ENCODE measurements at regions of chr16 and their contacts with region 1.

Region 1: DNA sequence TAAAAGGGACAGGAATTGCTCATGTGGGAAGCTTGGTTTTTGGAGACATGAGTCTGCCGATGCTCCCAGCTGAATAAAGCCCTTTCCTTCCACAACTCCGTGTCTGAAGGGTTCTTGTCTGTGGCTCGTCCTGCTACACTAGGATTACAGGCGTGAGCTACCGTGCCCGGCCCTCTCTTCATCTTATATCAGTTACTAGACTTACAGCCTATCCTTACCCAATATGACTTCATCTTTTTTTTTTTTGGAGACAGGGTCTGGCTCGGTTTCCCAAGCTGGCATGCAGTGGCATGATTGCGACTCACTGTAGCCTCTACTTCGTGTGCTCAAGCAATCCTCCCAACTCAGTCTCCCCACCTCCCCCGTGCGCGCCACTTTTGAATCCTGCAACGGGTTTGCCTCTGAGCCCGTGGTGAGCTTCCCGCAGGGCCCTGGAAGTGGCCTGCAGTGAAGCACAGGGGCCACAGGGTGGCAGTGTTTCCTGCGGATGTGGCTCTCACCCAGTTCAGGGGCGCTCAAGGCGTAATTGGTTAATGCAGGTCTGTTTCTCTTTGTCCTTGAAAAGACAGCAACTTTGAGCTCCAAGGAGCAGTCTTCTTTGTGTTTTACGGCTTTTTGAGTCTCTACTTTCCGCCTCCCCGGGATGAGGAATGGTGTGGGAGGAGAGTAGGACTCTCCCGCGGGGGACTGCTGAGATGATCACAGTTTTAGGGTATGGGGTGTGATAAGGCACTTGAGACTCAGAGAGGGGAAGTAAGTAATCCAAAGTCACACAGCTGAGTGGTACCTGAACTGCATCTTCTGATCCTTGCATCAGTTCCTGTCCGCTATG is 22.7 kb upstream of the GPRC5B start:
- DNase-seq: peak; percentile 62
- ATAC-seq: peak; percentile 99
- H3K4me3 ChIP-seq: no peak overlapping the region
- H3K27ac ChIP-seq: no peak overlapping the region
- H3K4me1 ChIP-seq: peaks cover 0 to 8% of the 10 kb centered on the region in 2 experiments; a peak in 2 of 4 replicates
- H3K27me3 ChIP-seq: no peaks in the 10 kb centered on the region
- CTCF ChIP-seq: peak; percentile 95 to 99 (median 98)
- POLR2A ChIP-seq: no peak
- RAD21 ChIP-seq: peak; percentile 94

Region 2: DNA sequence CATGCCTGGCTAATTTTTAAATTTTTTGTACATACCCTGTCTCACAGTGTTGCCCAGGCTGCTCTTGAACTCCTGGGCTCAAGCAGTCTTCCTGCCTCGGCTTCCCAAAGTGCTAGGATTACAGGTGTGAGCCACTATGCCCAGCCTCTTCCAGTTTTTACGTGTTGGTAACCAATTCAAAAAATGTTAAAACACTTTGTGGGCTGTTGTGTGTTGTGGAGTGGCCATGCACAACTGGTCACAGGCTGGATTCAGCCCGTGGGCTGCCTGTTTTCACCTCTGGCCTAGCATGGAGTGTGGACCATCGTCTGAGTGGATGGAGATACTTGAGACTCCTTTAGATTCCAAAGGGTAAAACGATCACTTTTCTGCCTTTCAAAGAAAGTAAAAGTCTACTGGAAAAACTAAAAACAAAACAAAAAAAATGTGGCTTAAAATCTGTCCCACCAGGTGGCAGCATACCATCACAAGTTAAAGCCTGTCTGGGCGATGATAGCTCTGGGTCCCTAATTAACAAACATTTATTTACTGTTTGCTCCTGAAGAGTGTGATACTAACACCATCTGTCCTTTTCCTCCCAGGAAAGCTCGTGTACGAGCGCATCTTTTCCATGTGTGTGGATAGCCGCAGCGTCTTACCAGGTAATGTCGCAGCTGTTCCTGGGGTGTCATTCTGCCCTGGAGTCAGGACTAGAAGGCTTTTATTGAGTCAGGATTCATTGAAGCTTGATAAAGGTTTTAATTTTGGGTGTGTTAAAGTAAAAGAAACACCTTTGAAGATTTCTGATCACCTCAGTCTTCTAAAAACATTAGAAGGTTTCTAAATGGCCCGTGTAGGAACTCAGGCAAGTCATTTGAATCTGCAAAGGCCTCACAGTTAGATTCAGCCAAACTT is 306.0 kb before region 1 on chr16:
- CTCF ChIA-PET with region 1: interaction called, 12 read pairs
- POLR2A ChIA-PET with region 1: no interaction called
- RAD21 ChIA-PET with region 1: no interaction called
- intact Hi-C with region 1: no loop called
- DNase-seq: peak; percentile 36
- ATAC-seq: peak; percentile 67
- H3K4me3 ChIP-seq: no peak overlapping the region
- H3K27ac ChIP-seq: no peak overlapping the region
- H3K4me1 ChIP-seq: no peaks in the 10 kb centered on the region; a peak in 1 of 4 replicates
- H3K27me3 ChIP-seq: no peaks in the 10 kb centered on the region
- CTCF ChIP-seq: peak; percentile 56 to 86 (median 78); a peak in 5 of 6 replicates
- POLR2A ChIP-seq: no peak
- RAD21 ChIP-seq: peak; percentile 91

Region 3: GRCh38 chr16:19886073-19886941 is 21.1 kb before region 1 on chr16:
- CTCF ChIA-PET with region 1: interaction called, 6 read pairs
- POLR2A ChIA-PET with region 1: no interaction called
- RAD21 ChIA-PET with region 1: no interaction called
- intact Hi-C with region 1: loop called (anchors 1 kb)
- DNase-seq: peak; percentile 72
- ATAC-seq: peak; percentile 76
- H3K4me3 ChIP-seq: no peak overlapping the region
- H3K27ac ChIP-seq: no peak overlapping the region
- H3K4me1 ChIP-seq: peaks cover 3 to 15% of the 10 kb centered on the region in 2 experiments; a peak in 3 of 4 replicates
- H3K27me3 ChIP-seq: no peaks in the 10 kb centered on the region
- CTCF ChIP-seq: peak; percentile 93 to 100 (median 99)
- POLR2A ChIP-seq: no peak
- RAD21 ChIP-seq: peak; percentile 99

Region 4: DNA sequence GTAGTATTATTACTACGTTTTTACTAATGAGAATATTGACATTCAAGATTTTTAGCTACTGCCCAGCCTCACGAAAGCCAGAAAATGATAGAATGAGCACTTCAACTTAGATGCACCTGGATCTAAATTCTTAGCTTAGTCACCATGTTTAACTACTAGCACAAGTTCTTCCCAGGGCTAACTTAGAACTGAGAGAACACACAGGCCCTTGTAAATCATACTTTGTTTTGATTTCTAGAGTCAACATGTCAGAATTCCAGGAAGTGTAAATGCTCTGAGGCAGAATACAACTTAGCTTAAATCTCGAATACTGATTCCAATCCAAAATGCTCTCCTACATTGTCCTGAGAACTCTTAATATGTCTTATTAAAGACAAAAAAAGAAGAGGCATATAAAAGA is 796.9 kb after region 1 on chr16:
- CTCF ChIA-PET with region 1: interaction called, 3 read pairs
- POLR2A ChIA-PET with region 1: no interaction called
- RAD21 ChIA-PET with region 1: no interaction called
- intact Hi-C with region 1: loop called (anchors 10 kb)
- DNase-seq: no peak
- ATAC-seq: no peak
- H3K4me3 ChIP-seq: no peak overlapping the region
- H3K27ac ChIP-seq: no peak overlapping the region
- H3K4me1 ChIP-seq: no peaks in the 10 kb centered on the region
- H3K27me3 ChIP-seq: peaks cover 15% of the 10 kb centered on the region
- CTCF ChIP-seq: no peak
- POLR2A ChIP-seq: no peak
- RAD21 ChIP-seq: no peak

Measured in HCT116 (cell line).